GM13977 (cell line): ENCODE measurements at regions of chr17 and their contacts with region 1.

Region 1: DNA sequence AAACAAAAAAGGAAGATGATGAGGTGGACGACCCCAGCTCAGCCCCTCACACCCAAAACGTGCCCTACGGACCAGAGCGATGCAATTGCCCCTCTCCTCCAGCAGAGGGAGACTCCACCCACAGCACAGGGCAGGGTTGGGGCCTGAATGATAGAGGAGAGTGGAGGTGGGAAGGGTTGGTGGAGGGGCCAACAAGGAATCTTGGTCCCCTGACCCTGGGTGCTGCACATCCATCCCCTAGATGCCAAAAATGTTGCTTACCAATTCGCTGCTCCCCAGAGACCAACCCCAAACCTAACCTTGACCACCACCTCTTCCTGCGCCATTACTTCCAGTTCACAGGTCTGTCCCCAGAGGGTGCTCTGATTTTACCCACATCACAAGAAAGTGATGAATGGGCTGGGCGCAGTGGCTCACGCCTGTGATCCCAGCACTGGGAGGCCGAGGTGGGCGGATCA is 12.9 kb downstream of the P2RX5 start:
- DNase-seq: peak; percentile 89
- CTCF ChIP-seq: peak; percentile 93

Region 2: DNA sequence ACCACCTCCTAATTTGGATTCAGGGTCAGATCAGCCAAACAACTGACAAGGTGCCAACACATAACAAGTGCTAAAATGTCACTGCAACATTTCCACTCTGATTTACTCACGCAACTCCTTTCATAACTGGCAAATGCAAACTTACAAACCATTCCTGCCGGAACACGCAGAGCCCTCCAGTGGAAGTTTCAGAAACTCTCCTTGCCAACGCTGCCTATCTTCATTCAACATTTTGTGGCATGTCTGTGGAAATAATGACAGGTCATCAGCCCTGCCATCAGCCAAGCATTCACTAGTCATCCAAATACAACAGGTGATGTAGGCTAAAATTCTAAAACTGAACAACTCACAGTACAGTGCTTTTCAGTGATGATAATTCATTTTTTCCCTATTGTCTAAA is 347.2 kb before region 1 on chr17:
- in situ Hi-C with region 1: no loop called
- DNase-seq: no peak
- CTCF ChIP-seq: no peak

Region 3: GRCh38 chr17:3497101-3497500 is 186.0 kb before region 1 on chr17:
- in situ Hi-C with region 1: no loop called
- DNase-seq: no peak
- CTCF ChIP-seq: no peak

Region 4: DNA sequence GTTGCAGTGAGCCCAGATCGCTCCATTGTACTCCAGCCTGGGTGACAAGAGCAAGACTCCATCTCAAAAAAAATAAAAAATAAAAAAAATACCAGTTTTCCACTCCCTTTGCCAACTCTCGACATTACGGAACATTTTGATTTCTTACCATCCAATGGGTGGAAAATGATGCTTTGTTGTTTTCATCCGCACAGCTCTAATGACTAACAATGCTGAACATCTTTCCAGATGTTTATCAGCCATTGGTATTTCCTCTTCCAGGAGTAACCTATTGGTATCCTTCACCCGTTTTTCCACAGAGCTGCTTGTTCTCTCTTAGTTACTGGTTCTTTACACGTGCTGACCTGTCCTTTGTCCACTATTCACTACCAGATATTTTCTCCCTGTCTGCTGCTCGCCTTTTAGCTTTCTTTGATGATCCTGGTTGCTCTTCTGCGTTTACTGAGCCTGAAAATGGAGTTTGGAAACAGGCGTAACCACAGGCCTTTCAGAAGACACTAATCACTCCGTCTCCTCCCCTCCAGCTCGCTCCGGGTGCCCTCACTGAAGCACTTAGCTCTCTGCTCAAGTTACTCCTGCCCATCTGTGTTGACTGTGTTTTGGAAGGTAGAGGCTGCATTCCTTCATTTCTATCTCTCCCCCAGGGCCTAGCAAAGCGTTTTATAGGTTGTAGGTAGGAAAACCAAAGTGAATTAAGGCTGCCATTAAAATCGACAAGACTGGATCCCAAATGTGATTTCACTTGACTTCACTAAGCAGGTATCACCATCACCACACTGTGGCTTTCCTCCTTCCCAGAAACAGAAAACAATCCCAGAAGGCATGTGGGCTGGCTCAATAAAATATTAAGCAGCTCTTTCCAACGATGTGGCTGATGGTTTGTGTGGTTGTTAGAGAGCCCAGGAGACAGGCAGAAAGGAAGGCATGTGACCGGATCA is 56.0 kb before region 1 on chr17:
- in situ Hi-C with region 1: no loop called
- DNase-seq: no peak
- CTCF ChIP-seq: no peak

Region 5: DNA sequence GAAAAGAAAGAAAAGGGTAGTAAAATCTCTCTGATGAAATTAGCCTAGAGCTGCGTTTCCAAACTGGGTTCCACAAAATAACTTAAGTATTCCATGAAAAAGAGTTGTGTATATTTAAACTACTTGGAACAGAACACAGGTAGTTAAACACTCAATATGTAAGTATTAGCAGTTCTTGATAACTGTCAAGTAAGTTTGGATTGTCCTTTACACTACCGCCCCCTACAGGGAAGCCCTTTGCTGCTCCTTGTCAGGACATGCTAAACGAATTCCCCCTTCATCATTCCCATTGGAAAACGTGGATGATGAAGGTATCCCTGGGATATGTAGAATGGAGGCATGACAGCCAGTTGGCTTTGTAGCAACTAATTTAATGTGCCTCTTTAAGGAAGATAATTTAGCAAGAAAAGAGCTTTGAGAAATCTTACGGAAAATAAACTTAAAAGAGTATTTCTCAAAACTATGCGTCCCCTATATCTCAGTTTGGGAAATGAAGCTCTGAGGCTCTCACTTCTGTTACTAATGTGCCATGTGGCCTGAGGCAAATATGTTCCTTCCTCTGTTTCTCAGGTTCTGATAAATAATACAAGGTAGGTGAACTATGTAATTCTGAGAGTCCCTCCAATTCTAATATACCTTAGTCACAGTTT is 144.2 kb after region 1 on chr17:
- in situ Hi-C with region 1: loop called (anchors 10 kb)
- DNase-seq: peak; percentile 63
- CTCF ChIP-seq: peak; percentile 84